ENCODE measurements at regions of chr11 and their contacts with region 1.

Region 1: DNA sequence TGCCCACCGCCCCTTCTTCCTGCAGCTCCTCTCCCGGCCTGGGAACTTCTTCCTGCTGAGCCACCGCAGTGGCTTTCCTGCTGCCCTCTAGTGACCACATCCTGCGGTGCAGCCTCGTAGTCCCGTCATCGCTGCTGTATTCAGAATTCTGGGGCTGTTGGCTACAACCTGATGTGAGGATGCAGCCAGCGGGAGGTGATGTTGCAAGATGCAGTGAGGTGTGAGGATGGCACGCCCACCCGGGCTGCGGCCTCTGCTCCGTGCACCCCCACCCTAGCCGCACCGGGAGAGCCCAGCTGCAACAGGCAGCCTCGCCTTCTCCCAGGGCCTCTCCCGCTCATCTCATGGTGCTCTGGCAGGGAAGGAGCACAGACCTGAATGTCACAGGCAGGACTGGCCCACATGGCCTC is 10.1 kb downstream of the CHST1 start:
- DNase-seq: peak; percentile 80
- H3K4me3 Mint-ChIP-seq: no peak overlapping the region
- H3K27ac Mint-ChIP-seq: no peak overlapping the region
- H3K4me1 Mint-ChIP-seq: no peaks in the 10 kb centered on the region
- H3K27me3 Mint-ChIP-seq: peaks cover 94% of the 10 kb centered on the region
- CTCF ChIP-seq: peak; percentile 89

Region 2: DNA sequence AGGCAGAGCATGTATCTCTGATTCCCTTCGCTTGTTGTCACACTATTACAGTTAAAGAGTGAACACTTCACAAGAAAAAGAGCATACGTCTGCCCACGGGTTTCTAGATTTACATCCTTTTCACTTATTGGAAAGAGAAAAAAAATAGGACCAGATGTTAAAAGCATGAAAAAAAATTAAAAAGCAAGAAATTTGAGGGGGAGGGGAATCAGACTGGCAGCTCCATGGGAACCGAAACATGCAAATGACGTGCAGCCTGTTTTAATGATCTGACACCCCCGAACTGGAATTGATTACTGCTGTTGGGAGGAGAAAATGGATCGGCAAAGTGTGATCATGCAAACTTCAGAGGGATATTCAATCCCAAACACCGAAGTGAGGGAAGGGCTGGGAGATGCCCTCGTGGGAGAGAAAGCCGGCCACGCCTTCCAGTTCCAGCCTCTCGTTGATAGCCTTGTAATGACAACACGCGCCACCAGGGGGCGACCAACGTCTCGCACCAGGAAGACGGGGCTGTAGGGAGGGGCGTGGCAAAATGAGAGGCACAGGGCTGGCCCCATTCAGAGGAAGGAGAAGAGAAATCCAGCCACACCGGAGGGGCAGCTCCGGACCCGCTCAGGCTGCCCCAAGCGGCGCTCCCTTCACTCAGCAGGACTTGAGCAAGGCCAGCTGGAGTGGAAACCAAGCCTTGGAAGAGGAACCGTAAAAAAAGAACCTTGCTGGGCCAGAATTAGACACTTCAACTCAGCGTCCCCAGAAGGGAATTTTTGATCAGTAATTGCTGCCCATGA is 315.4 kb before region 1 on chr11:
- CTCF ChIA-PET with region 1: no interaction called
- intact Hi-C with region 1: loop called (anchors 10 kb)
- DNase-seq: peak; percentile 97
- H3K4me3 Mint-ChIP-seq: peak overlapping the region; percentile 5
- H3K27ac Mint-ChIP-seq: no peak overlapping the region
- H3K4me1 Mint-ChIP-seq: peaks cover 13% of the 10 kb centered on the region
- H3K27me3 Mint-ChIP-seq: peaks cover 86% of the 10 kb centered on the region
- CTCF ChIP-seq: peak; percentile 94

Region 3: GRCh38 chr11:45371251-45372115 is 283.9 kb before region 1 on chr11:
- CTCF ChIA-PET with region 1: interaction called, 5 read pairs
- intact Hi-C with region 1: loop called (anchors 10 kb)
- DNase-seq: peak; percentile 73
- H3K4me3 Mint-ChIP-seq: no peak overlapping the region
- H3K27ac Mint-ChIP-seq: no peak overlapping the region
- H3K4me1 Mint-ChIP-seq: no peaks in the 10 kb centered on the region
- H3K27me3 Mint-ChIP-seq: peaks cover 98% of the 10 kb centered on the region
- CTCF ChIP-seq: peak; percentile 80